Caco-2 (cell line): ENCODE measurements at regions of chr3 and their contacts with region 1.

Region 1: DNA sequence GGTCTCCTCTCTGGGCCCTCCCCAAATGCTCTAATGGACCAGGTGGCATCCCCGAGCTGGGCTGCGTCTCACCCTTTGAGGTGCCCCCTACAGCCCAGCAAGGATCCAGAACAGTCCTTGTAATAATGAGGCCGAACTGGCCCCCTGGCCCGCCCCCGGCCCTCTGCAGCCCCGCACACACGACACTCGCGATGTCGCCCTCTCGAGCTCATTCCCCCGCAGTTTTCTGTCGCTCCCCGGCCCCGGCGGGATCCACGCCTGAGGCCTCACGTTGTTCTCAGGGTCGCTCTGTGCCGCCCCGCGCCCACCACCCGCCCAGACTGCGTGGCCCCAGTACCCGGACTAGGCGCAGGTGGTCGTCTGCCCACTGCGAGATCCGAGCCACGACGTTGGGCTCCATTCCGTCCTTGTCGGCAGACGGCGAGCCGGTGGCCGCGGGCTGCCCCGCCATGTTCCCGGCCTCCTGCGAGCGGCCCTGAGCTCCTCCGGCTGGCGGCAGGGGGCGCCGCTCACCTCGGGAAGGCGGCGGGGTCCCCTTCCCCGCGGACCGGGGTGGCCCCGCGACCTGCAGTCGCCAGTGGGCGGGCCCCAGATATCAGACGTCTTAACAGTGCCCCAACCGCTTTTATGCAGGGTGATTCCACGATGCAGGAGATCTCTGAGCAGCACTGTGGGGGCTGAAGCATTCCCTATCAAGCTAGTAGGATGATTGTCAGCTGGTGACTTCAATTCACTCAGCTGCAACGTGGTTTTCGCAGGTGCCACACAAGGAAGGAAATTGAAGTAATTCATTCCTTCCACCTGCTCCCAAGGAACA is at the start of gene C3orf33:
- DNase-seq: peak; percentile 58 to 83
- H3K4me3 ChIP-seq: peak within 1 kb of the TSS; percentile 93
- H3K4me3 Mint-ChIP-seq: peak within 1 kb of the TSS; percentile 87
- H3K27ac Mint-ChIP-seq: peak within 1 kb of the TSS; percentile 75
- H3K4me1 ChIP-seq: 0 out of 2 replicates have a peak, but pooled peaks cover 7% of the 10 kb centered on the region
- H3K4me1 Mint-ChIP-seq: peaks cover 6% of the 10 kb centered on the region
- H3K27me3 ChIP-seq: no peaks in the 10 kb centered on the region
- H3K27me3 Mint-ChIP-seq: no peaks in the 10 kb centered on the region
- CTCF ChIP-seq: peak; percentile 76 to 77
- total RNA-seq, gene C3orf33: 4.2 and 5.4 TPM in 2 replicates

Region 2: DNA sequence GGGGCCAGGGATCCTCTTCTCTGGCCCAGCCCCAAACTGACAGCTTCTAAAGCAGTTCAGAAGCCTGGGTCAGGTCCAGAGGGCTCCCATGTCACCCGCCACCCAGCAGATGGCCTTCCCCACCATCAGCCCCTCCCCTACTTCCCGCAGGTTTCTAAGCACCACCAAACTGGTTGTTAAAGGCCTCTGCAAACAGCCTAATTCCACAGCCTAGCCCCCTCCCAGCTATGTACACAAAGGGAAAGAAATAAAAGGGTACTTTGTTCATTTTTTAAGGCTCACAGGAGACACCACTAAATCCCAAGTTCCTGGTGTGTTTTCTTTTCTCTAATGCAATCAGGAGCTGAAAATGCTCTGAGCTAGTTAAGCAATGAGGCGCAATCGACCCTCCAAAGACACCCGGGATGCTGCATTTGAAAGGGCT is 91.7 kb before region 1 on chr3:
- CTCF ChIA-PET with region 1: interaction called, 13 read pairs
- POLR2A ChIA-PET with region 1: no interaction called
- intact Hi-C with region 1: no loop called
- DNase-seq: peak; percentile 81
- H3K4me3 ChIP-seq: no peak overlapping the region
- H3K4me3 Mint-ChIP-seq: no peak overlapping the region
- H3K27ac Mint-ChIP-seq: no peak overlapping the region
- H3K4me1 ChIP-seq: peaks cover 16% of the 10 kb centered on the region; the same call in 1 of the 2 replicates
- H3K4me1 Mint-ChIP-seq: peaks cover 9% of the 10 kb centered on the region
- H3K27me3 ChIP-seq: no peaks in the 10 kb centered on the region
- H3K27me3 Mint-ChIP-seq: no peaks in the 10 kb centered on the region
- CTCF ChIP-seq: peak in 1 of 2 experiments; percentile 38

Region 3: DNA sequence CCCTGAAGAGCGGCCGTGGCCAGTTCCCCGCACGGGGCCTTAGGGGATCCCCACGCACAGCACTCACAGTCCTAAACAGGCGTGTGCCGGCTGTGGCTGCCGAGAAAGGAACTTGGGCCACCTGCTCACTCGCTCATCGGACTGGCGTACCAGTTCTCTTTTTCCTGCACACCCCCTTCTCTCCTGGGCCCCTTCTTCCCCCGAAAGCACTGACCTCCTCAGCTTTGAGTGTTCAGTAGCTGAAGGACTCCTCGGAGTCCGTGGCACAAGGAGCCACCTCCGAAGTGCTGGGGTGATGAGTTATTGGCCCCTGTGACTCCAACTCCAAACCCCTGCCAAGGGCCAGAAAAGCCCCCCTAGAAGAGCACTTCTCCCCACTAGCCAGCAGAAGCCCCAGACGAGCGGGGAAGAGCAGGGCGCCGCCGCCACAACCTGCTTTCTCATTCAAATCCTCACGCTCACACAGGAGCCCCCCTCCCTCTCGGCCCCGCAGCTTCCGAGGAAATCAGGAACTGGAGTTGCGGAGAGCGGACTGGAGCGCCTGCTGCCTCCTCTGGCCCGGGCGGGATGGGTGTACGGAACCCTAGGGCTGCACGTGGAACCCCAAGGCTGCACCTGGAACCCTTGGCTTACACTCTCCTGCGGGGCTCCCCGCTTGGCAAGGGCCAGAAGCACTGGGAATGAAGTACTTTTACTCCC is 61.2 kb before region 1 on chr3 and contains the start of gene PLCH1:
- CTCF ChIA-PET with region 1: interaction called, 13 read pairs
- POLR2A ChIA-PET with region 1: interaction called, 3 read pairs
- intact Hi-C with region 1: loop called (anchors 2 kb)
- DNase-seq: peak; percentile 82 to 83
- H3K4me3 ChIP-seq: peak within 1 kb of the TSS; percentile 94
- H3K4me3 Mint-ChIP-seq: peak within 1 kb of the TSS; percentile 99
- H3K27ac Mint-ChIP-seq: peak within 1 kb of the TSS; percentile 93
- H3K4me1 ChIP-seq: peaks cover 29% of the 10 kb centered on the region
- H3K4me1 Mint-ChIP-seq: peaks cover 41% of the 10 kb centered on the region
- H3K27me3 ChIP-seq: no peaks in the 10 kb centered on the region
- H3K27me3 Mint-ChIP-seq: no peaks in the 10 kb centered on the region
- CTCF ChIP-seq: no peak
- total RNA-seq, gene PLCH1: 2.8 and 3.1 TPM in 2 replicates

Region 4: GRCh38 chr3:155778462-155778861 is 27.5 kb before region 1 on chr3:
- CTCF ChIA-PET with region 1: interaction called, 11 read pairs
- POLR2A ChIA-PET with region 1: no interaction called
- intact Hi-C with region 1: no loop called
- DNase-seq: no peak
- H3K4me3 ChIP-seq: no peak overlapping the region
- H3K4me3 Mint-ChIP-seq: no peak overlapping the region
- H3K27ac Mint-ChIP-seq: no peak overlapping the region
- H3K4me1 ChIP-seq: no peaks in the 10 kb centered on the region
- H3K4me1 Mint-ChIP-seq: no peaks in the 10 kb centered on the region
- H3K27me3 ChIP-seq: no peaks in the 10 kb centered on the region
- H3K27me3 Mint-ChIP-seq: no peaks in the 10 kb centered on the region
- CTCF ChIP-seq: no peak

Region 5: GRCh38 chr3:155854141-155854940 is 48.3 kb after region 1 on chr3 and contains the start of gene SLC33A1:
- CTCF ChIA-PET with region 1: interaction called, 16 read pairs
- POLR2A ChIA-PET with region 1: interaction called, 7 read pairs
- intact Hi-C with region 1: loop called (anchors 1 kb)
- DNase-seq: peak; percentile 98 to 99
- H3K4me3 ChIP-seq: peak within 1 kb of the TSS; percentile 95
- H3K4me3 Mint-ChIP-seq: peak within 1 kb of the TSS; percentile 90
- H3K27ac Mint-ChIP-seq: peak within 1 kb of the TSS; percentile 95
- H3K4me1 ChIP-seq: peaks cover 11% of the 10 kb centered on the region; the same call in 1 of the 2 replicates
- H3K4me1 Mint-ChIP-seq: no peaks in the 10 kb centered on the region
- H3K27me3 ChIP-seq: no peaks in the 10 kb centered on the region
- H3K27me3 Mint-ChIP-seq: no peaks in the 10 kb centered on the region
- CTCF ChIP-seq: no peak
- total RNA-seq, gene SLC33A1: 19.6 TPM in 2 replicates

Region 6: DNA sequence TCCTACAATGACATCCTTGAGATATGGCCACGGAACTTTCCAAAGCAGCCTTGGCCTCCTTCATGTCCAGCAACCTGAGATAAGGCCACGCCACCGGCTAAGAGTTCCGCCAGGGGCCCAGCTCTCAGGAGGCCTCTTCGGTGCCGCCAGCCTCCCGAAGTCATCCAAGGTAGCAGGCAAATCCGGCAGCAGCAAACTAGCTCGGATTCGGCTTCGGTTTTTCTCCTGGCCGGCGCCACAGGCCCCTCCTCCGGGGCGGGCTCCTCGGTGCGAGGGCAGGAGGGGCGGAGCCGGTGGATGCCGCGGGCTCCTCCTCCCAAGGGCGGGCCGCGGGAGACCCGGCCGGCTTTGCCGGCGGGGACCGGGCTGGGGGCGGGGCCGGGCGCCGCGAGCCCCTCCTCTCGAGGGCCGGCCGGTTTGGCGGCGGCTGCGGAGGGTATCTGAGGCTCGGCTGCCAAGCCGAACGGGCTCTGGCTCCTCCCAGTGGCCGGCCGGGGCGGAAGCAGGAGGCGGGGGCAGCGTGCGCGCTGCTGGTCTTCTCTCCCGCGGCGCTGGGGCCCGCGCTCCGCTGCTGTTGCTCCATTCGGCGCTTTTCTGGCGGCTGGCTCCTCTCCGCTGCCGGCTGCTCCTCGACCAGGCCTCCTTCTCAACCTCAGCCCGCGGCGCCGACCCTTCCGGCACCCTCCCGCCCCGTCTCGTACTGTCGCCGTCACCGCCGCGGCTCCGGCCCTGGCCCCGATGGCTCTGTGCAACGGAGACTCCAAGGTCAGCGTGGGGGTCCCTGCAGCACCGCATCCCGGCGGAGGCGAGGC is 64.3 kb after region 1 on chr3 and contains the start of gene GMPS:
- CTCF ChIA-PET with region 1: interaction called, 29 read pairs
- POLR2A ChIA-PET with region 1: interaction called, 9 read pairs
- intact Hi-C with region 1: loop called (anchors 1 kb)
- DNase-seq: peak; percentile 94 to 98
- H3K4me3 ChIP-seq: peak within 1 kb of the TSS; percentile 100
- H3K4me3 Mint-ChIP-seq: peak within 1 kb of the TSS; percentile 97
- H3K27ac Mint-ChIP-seq: peak within 1 kb of the TSS; percentile 95
- H3K4me1 ChIP-seq: peaks cover 12% of the 10 kb centered on the region
- H3K4me1 Mint-ChIP-seq: no peaks in the 10 kb centered on the region
- H3K27me3 ChIP-seq: no peaks in the 10 kb centered on the region
- H3K27me3 Mint-ChIP-seq: no peaks in the 10 kb centered on the region
- CTCF ChIP-seq: peak in 1 of 2 experiments; percentile 54
- total RNA-seq, gene GMPS: 90.7 and 102 TPM in 2 replicates

Region 7: DNA sequence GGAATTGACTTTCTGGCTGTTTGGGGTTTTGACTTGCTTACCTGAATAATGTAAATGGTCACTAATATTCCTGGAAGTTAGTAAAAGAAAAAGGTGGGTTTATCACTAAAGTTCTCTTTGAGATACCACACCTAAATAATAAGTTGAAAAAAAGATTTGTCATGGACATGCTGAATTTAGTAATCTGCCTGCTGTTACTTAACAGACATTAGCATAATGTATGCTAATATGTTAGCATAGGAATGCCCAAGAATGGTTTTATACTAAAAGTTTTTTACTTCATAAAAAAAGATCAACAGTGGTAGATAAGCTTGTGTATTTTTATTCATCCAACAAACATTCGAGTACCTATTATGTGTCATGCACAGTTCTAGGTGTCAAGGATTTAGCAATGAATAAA is 100.9 kb after region 1 on chr3:
- CTCF ChIA-PET with region 1: no interaction called
- POLR2A ChIA-PET with region 1: no interaction called
- intact Hi-C with region 1: no loop called
- DNase-seq: no peak
- H3K4me3 ChIP-seq: no peak overlapping the region
- H3K4me3 Mint-ChIP-seq: no peak overlapping the region
- H3K27ac Mint-ChIP-seq: no peak overlapping the region
- H3K4me1 ChIP-seq: no peaks in the 10 kb centered on the region
- H3K4me1 Mint-ChIP-seq: no peaks in the 10 kb centered on the region
- H3K27me3 ChIP-seq: no peaks in the 10 kb centered on the region
- H3K27me3 Mint-ChIP-seq: no peaks in the 10 kb centered on the region
- CTCF ChIP-seq: no peak

Region 8: GRCh38 chr3:155983838-155984474 is 177.9 kb after region 1 on chr3:
- CTCF ChIA-PET with region 1: interaction called, 3 read pairs
- POLR2A ChIA-PET with region 1: no interaction called
- intact Hi-C with region 1: loop called (anchors 5 kb)
- DNase-seq: peak in 1 of 2 experiments; percentile 5
- H3K4me3 ChIP-seq: no peak overlapping the region
- H3K4me3 Mint-ChIP-seq: no peak overlapping the region
- H3K27ac Mint-ChIP-seq: no peak overlapping the region
- H3K4me1 ChIP-seq: peaks cover 7% of the 10 kb centered on the region; the same call in 1 of the 2 replicates
- H3K4me1 Mint-ChIP-seq: no peaks in the 10 kb centered on the region
- H3K27me3 ChIP-seq: no peaks in the 10 kb centered on the region
- H3K27me3 Mint-ChIP-seq: peaks cover 3% of the 10 kb centered on the region
- CTCF ChIP-seq: peak; percentile 22 to 31